Endothelial cell of umbilical vein (primary cell): ENCODE measurements at regions of chr12 and their contacts with region 1.

Region 1: DNA sequence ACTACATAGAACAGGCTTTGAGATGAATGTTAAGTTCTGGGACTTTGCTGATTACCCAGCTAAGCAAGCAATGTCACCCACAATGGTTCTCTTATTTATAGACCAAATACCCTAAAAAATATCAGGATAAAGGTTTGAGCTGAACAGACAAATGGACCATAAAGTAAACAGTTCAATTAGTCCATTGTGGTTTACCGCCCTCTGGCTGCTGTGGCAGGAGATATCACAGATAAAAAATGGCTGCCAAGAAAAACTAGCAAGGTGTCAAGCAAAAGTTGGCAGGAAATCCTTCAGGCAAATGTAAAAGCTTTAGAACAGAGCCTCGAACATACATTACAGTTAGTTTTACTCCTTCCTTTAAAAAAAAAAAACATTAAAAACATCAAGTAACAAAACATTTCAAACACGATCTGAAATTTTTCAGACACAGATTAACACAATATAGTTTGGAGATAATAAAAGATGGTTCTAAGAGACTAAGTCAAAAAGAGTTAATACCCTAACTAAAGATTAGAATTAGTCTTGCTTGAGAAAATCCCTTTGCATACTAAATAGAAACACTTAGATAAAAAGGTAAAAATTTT is 41.3 kb downstream of the MED13L start:
- DNase-seq: peak; percentile 87
- H3K4me3 ChIP-seq: no peak overlapping the region
- H3K27ac ChIP-seq: peak overlapping the region; percentile 17
- H3K4me1 ChIP-seq: peaks cover 14% of the 10 kb centered on the region
- H3K27me3 ChIP-seq: no peaks in the 10 kb centered on the region
- CTCF ChIP-seq: peak; percentile 59
- POLR2A ChIP-seq: no peak

Region 2: DNA sequence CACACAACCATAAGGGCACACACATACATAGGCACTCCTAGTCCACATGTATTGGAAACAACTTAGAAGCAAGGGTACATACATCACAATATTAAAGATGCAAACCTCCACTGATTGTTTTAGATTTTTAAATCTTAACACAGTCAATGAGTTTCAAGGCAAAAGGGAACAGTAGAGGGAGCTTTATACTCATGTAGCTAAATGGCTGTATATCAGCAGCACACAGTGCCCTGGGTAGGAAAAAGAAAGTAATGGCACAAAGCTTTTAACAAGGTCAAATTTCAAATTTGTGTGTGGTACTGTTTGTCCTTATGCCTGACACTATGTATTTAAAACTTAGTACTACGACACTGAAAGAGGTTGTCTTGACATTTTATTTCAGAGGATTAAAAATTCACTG is 220.7 kb before region 1 on chr12:
- CTCF ChIA-PET with region 1: interaction called, 43 read pairs
- POLR2A ChIA-PET with region 1: no interaction called
- dilution Hi-C with region 1: no loop called
- intact Hi-C with region 1: loop called (anchors 5 kb)
- DNase-seq: peak; percentile 64
- H3K4me3 ChIP-seq: no peak overlapping the region
- H3K27ac ChIP-seq: no peak overlapping the region
- H3K4me1 ChIP-seq: no peaks in the 10 kb centered on the region
- H3K27me3 ChIP-seq: no peaks in the 10 kb centered on the region
- CTCF ChIP-seq: peak; percentile 21 to 34
- POLR2A ChIP-seq: no peak

Region 3: DNA sequence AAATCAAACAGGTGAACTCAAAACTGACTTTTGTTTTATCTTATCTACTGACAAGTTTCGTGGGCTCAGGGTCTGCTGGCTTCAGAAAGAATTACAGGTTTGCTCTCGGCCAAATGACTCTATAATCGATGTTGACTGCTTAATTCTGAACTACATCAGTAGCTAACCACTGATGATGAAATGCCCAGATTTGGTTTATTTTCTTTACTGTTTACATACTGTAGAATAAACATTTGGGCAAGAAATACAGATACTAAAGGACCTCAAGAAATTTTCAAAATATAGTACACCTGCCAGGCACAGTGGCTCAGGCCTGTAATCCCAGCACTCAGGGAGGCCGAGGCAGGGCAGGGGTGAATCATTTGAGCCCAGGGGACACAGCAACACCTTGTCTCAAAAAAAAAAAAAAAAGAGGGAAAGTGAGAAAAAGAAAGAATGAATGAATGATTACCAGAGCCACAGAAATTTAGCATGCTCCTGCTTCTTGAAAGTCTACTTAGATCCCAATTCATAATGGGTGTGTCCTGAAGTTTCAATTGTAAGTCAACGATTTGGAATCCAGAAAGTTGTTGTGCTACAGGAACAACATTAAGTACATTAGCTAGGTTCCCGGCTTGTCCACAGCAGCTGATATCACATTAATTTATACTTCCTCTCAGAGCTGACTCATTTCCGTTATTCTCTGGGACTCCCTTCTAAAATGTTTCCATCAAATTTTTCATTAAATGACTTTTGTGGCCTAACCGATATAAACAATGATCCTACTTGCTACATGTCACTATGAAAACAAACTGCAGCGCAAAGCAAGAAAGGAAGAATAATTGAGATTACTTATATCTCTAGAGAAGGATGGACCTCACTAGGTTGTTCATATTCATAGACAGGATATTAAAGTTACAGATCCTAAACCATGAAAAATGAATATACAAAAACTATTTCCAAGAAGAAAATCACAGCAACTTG is 93.0 kb before region 1 on chr12:
- CTCF ChIA-PET with region 1: interaction called, 79 read pairs
- POLR2A ChIA-PET with region 1: no interaction called
- dilution Hi-C with region 1: no loop called
- intact Hi-C with region 1: loop called (anchors 1 kb)
- DNase-seq: peak; percentile 97
- H3K4me3 ChIP-seq: peak overlapping the region in 1 of 3 experiments; percentile 18
- H3K27ac ChIP-seq: peak overlapping the region; percentile 99
- H3K4me1 ChIP-seq: peaks cover 28% of the 10 kb centered on the region
- H3K27me3 ChIP-seq: no peaks in the 10 kb centered on the region
- CTCF ChIP-seq: no peak
- POLR2A ChIP-seq: peak; percentile 25

Region 4: DNA sequence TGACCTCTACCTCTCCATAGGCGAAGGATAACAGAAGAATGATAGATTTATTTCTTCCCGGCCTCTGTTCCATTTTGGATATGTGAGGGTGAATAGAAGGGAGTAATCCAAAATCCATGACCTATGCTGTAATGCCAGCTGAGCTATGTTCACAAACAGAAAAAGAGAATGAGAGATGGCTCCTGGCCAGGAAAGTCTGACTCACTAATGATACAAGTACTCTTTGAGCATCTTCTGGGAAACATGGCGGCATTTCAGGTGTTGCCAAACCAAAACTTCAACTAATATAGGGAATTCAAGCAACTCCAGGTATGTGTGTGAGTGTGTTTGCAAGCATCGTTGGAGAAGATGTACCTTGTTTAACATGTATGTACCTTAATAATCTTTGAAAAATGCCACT is 13.9 kb before region 1 on chr12:
- CTCF ChIA-PET with region 1: interaction called, 16 read pairs
- POLR2A ChIA-PET with region 1: no interaction called
- dilution Hi-C with region 1: no loop called
- intact Hi-C with region 1: no loop called
- DNase-seq: peak; percentile 93
- H3K4me3 ChIP-seq: no peak overlapping the region
- H3K27ac ChIP-seq: no peak overlapping the region
- H3K4me1 ChIP-seq: peaks cover 3% of the 10 kb centered on the region
- H3K27me3 ChIP-seq: no peaks in the 10 kb centered on the region
- CTCF ChIP-seq: no peak
- POLR2A ChIP-seq: no peak

Region 5: GRCh38 chr12:116257215-116257614 is 21.0 kb after region 1 on chr12:
- CTCF ChIA-PET with region 1: interaction called, 17 read pairs
- POLR2A ChIA-PET with region 1: no interaction called
- dilution Hi-C with region 1: no loop called
- intact Hi-C with region 1: no loop called
- DNase-seq: peak; percentile 42
- H3K4me3 ChIP-seq: no peak overlapping the region
- H3K27ac ChIP-seq: no peak overlapping the region
- H3K4me1 ChIP-seq: peaks cover 3% of the 10 kb centered on the region
- H3K27me3 ChIP-seq: no peaks in the 10 kb centered on the region
- CTCF ChIP-seq: no peak
- POLR2A ChIP-seq: no peak

Region 6: DNA sequence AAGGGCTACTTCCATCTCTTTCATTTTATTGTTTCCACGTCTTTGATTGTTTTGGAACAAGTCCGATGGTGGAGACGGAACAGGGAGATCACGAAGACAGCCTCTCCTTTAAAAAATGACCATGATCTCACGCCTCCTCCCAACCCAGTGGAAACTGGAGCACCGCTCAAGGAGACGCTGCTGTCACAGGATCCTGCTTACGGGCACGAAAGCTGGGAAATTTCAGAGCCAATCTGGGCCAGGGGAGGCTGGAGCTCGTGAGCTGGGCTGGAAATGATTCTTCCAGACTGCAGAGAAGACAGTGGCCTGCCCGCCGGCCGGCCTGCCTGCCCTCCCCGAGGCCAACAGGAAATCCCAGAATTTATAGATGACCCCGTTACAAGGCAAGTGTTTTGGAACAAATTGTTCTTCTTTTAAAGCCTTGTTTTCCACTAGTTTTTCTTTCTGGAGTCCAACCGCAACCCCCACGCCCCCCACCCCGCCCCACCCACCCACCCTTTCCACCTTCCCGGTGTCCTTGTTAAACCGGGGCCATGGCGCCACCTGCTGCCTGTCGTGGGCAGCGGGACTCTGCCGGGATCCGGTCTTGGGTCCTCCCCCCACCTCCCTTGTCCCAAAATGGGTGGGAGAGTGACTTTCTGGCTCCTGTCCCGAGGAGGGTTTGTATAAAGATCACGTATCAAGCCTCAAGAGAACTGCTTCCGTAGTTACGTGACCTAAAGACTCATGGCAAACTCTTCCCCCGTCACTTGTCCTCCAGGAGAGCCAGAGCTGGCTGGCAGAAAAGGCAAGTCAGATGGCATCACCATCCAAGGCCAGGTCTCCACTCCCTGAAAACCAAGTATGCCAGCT is 363.3 kb after region 1 on chr12:
- CTCF ChIA-PET with region 1: interaction called, 11 read pairs
- POLR2A ChIA-PET with region 1: no interaction called
- dilution Hi-C with region 1: no loop called
- intact Hi-C with region 1: loop called (anchors 1 kb)
- DNase-seq: peak; percentile 73
- H3K4me3 ChIP-seq: peak overlapping the region in 2 of 3 experiments; percentile 0 to 38
- H3K27ac ChIP-seq: peak overlapping the region; percentile 30
- H3K4me1 ChIP-seq: peaks cover 10% of the 10 kb centered on the region
- H3K27me3 ChIP-seq: no peaks in the 10 kb centered on the region
- CTCF ChIP-seq: peak; percentile 42 to 73
- POLR2A ChIP-seq: no peak